A549 (cell line): ENCODE measurements at regions of chr11 and their contacts with region 1.

Region 1: GRCh38 chr11:13216019-13216710 is 61.4 kb upstream of the BMAL1 start:
- DNase-seq: peak; percentile 90 to 91
- ATAC-seq: peak; percentile 96 to 97
- H3K4me3 ChIP-seq: peak overlapping the region; percentile 15; the same call in 1 of the 3 replicates
- H3K27ac ChIP-seq: peak overlapping the region; percentile 89 to 91
- H3K4me1 ChIP-seq: peaks cover 35% of the 10 kb centered on the region
- CTCF ChIP-seq: no peak
- EP300 ChIP-seq: peak in 1 of 2 experiments; percentile 65; a peak in 1 of 5 replicates
- POLR2A ChIP-seq: no peak
- RAD21 ChIP-seq: peak in 1 of 2 experiments; percentile 15; a peak in 3 of 5 replicates

Region 2: DNA sequence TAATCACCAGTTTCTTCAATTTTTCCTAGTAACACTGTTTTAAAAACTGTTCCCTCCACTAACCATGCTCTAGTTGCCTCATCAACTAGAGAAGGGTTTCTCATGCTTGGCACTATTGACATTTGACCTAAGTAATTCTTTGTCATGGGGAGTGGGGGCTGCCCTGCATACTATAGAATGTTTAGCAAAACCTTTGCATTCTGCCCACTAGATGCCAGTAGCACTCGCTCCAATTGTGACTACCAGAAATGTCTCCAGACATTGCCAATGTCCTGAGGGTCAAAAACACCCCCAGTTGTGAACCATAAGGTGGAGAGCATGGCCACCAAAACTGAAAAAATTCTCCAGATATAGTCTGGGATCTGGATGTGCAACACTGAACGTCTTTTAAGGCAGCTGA is 33.8 kb after region 1 on chr11:
- CTCF ChIA-PET with region 1: interaction called, 36 read pairs
- POLR2A ChIA-PET with region 1: no interaction called
- DNase-seq: peak in 1 of 2 experiments; percentile 27
- ATAC-seq: peak; percentile 75 to 82
- H3K4me3 ChIP-seq: no peak overlapping the region
- H3K27ac ChIP-seq: no peak overlapping the region
- H3K4me1 ChIP-seq: peaks cover 6% of the 10 kb centered on the region
- CTCF ChIP-seq: peak; percentile 52
- EP300 ChIP-seq: no peak
- POLR2A ChIP-seq: no peak
- RAD21 ChIP-seq: peak; percentile 66 to 70

Region 3: DNA sequence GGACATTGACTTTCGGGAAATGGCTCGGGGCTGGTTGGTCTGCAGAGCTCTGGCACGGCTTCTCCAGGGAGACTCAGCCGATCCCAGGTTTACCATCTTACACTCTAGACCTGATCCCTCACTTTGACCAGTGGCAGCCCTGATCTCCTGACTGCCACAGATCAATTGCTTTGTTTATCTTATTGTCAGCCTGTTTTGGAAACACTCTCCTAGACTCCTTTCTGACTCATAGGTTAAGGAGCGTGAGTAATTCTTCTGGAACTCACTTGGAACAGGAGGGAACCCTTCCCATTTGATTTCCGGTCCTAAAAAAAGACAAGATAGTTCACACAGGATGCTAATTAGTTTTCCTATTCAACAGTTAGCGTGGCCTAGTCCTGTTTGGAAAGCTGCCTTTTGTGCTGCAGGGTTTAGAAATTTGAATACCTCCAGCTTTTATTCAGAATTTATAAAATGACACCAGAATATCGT is 45.5 kb after region 1 on chr11:
- CTCF ChIA-PET with region 1: interaction called, 30 read pairs
- POLR2A ChIA-PET with region 1: interaction called, 7 read pairs
- DNase-seq: peak; percentile 69 to 84
- ATAC-seq: peak; percentile 78 to 95
- H3K4me3 ChIP-seq: no peak overlapping the region
- H3K27ac ChIP-seq: peak overlapping the region; percentile 62 to 84
- H3K4me1 ChIP-seq: peaks cover 30% of the 10 kb centered on the region
- CTCF ChIP-seq: no peak
- EP300 ChIP-seq: no peak
- POLR2A ChIP-seq: no peak
- RAD21 ChIP-seq: no peak

Region 4: GRCh38 chr11:13276832-13277767 is 60.9 kb after region 1 on chr11:
- CTCF ChIA-PET with region 1: interaction called, 13 read pairs
- POLR2A ChIA-PET with region 1: interaction called, 12 read pairs
- DNase-seq: peak; percentile 98 to 99
- ATAC-seq: peak; percentile 93 to 99
- H3K4me3 ChIP-seq: peak overlapping the region; percentile 96
- H3K27ac ChIP-seq: peak overlapping the region; percentile 83 to 93
- H3K4me1 ChIP-seq: peaks cover 24% of the 10 kb centered on the region; the same call in 2 of the 3 replicates
- CTCF ChIP-seq: no peak
- EP300 ChIP-seq: no peak
- POLR2A ChIP-seq: peak; percentile 70
- RAD21 ChIP-seq: no peak